MCF 10A (cell line): ENCODE measurements at regions of chr9 and their contacts with region 1.

Region 1: DNA sequence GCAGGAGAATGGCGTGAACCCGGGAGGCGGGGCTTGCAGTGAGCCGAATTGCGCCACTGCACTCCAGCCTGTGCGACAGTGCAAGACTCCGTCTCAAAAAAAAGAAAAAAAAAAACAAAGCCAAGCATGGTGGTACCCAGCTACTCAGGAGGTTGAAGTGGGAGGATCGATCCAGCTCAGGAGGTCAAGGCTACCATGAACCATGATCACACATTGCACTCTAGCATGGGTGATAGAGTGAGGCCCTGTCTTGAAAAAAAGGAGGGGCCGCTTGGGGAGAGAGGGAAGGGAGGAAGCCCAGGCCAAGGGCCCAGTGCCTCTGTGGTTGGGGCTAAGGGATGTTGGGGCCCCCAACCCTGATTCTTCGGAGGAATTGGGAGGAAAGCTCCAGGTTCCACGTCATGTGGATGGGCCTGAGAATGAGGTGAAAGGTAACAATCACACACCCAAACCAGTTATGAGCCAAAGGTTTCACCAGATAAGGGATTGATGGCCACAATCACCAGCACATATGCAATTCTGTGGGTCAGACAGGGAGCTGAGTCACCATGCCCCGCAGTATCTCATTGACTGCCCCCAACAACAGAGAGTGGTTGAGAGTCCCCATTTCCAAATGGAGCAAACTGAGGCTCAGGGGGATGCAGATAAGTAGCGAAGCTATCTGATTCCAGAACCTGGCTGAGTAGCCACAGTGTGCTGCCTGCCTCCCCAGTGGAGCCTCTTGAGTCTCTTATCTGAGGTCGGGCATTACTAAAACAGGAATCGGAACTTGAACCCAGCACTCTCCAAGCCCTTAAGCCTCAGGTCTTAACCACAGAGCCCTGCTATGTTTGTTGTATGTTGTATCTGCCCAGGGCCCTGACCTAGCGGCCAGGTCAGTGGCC is 20.5 kb downstream of the SWI5 start:
- DNase-seq: no peak
- H3K4me3 Mint-ChIP-seq: no peak overlapping the region
- H3K27ac Mint-ChIP-seq: no peak overlapping the region
- H3K4me1 Mint-ChIP-seq: peaks cover 7% of the 10 kb centered on the region
- H3K27me3 Mint-ChIP-seq: no peaks in the 10 kb centered on the region
- CTCF ChIP-seq: no peak

Region 2: GRCh38 chr9:128322404-128323211 is 26.0 kb after region 1 on chr9 and contains the starts of genes COQ4 and TRUB2:
- CTCF ChIA-PET with region 1: interaction called, 11 read pairs
- POLR2A ChIA-PET with region 1: interaction called, 3 read pairs
- intact Hi-C with region 1: loop called (anchors 1 kb)
- DNase-seq: peak; percentile 95
- H3K4me3 Mint-ChIP-seq: peak within 1 kb of the TSS; percentile 86
- H3K27ac Mint-ChIP-seq: peak within 1 kb of the TSS; percentile 95
- H3K4me1 Mint-ChIP-seq: peaks cover 8% of the 10 kb centered on the region
- H3K27me3 Mint-ChIP-seq: no peaks in the 10 kb centered on the region
- CTCF ChIP-seq: no peak
- total RNA-seq, gene COQ4: 57.1 and 58.9 TPM in 2 replicates
- total RNA-seq, gene TRUB2: 36.1 and 37.6 TPM in 2 replicates

Region 3: GRCh38 chr9:128355451-128355850 is 58.9 kb after region 1 on chr9:
- CTCF ChIA-PET with region 1: interaction called, 21 read pairs
- POLR2A ChIA-PET with region 1: no interaction called
- intact Hi-C with region 1: no loop called
- DNase-seq: no peak
- H3K4me3 Mint-ChIP-seq: no peak overlapping the region
- H3K27ac Mint-ChIP-seq: no peak overlapping the region
- H3K4me1 Mint-ChIP-seq: no peaks in the 10 kb centered on the region
- H3K27me3 Mint-ChIP-seq: no peaks in the 10 kb centered on the region
- CTCF ChIP-seq: no peak

Region 4: DNA sequence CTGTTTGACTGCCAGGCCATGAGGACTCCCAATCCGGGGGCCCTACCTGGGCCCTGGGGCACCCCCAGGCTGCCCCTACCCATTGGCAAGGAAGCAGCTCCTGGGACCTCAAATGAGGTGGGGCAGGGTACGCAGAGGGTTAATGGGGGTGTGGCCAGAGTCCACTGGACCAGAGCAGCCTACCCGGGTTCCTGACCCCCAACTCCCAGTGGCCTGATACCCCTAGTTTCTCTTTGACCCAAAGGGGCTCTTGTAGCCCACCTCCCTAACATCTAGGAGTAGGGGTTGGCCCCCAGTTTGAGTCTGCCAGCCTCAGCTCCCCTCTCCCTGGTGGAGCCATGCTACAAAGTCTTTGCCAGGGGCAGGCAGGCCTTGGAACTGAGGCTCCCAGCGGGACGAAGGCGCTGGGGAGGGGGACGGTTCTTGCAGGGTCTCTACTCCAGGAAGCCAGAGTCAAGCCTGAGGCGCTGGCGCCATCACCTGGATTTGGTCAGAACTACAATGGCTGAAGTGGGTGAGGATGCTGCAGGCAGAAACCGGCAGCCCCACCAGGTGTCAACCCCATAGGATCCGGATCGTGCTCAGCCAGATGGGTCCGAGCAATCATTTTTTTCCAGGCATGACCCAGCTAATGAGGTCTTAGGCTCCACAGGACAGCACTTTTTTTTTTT is 115.7 kb after region 1 on chr9:
- CTCF ChIA-PET with region 1: interaction called, 3 read pairs
- POLR2A ChIA-PET with region 1: no interaction called
- intact Hi-C with region 1: loop called (anchors 2 kb)
- DNase-seq: peak; percentile 43
- H3K4me3 Mint-ChIP-seq: no peak overlapping the region
- H3K27ac Mint-ChIP-seq: no peak overlapping the region
- H3K4me1 Mint-ChIP-seq: no peaks in the 10 kb centered on the region
- H3K27me3 Mint-ChIP-seq: peaks cover 35% of the 10 kb centered on the region
- CTCF ChIP-seq: peak; percentile 49